ENCODE measurements at regions of chr17 and their contacts with region 1.

Region 1: DNA sequence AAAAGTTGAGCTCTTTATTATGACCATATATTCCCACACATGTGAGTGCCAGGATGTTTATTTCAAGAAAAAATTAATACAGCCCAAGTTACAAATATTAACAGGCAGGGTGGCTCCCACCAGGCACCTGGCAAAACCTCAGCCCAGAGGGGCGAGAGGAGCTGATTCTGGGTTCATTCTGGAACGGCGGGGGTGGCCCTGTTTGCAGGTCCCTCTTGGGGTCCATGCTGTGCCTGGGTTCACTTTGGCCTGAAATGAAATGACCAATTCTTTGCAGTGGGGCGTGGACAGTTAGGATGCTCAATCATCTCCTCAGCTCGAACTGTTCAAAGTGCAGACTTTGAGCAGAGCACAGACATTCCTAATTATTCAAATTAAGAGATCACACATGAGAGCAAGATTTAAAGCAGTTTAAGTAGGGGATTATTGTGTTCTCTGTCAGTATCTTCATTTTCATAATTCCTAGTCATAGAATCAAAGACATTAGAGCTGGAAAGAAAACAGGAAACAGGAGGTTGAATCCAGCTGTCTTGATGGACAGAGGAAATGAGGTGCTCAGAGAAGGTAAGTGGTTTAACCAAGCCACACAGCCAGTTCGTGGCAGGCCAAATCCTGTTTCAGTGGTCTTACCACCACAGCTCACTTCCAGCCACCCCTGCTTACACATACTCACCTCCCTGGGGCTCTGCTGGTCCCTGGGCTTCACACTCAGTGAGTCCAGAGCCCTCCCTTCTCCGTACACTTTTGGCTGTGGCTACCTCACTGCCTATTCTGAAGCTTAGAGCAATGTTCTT is 363.9 kb upstream of the TNRC6C start:
- DNase-seq: no peak
- H3K4me3 ChIP-seq: no peak overlapping the region
- H3K27ac ChIP-seq: no peak overlapping the region
- H3K4me1 ChIP-seq: no peaks in the 10 kb centered on the region
- H3K27me3 ChIP-seq: no peaks in the 10 kb centered on the region
- CTCF ChIP-seq: no peak

Region 2: GRCh38 chr17:77690271-77691161 is 95.9 kb after region 1 on chr17:
- CTCF ChIA-PET with region 1: no interaction called
- dilution Hi-C with region 1: loop called (anchors 5 kb)
- in situ Hi-C with region 1: no loop called
- intact Hi-C with region 1: no loop called
- DNase-seq: no peak
- H3K4me3 ChIP-seq: no peak overlapping the region
- H3K27ac ChIP-seq: no peak overlapping the region
- H3K4me1 ChIP-seq: peaks cover 7% of the 10 kb centered on the region
- H3K27me3 ChIP-seq: peaks cover 16% of the 10 kb centered on the region
- CTCF ChIP-seq: no peak

Region 3: DNA sequence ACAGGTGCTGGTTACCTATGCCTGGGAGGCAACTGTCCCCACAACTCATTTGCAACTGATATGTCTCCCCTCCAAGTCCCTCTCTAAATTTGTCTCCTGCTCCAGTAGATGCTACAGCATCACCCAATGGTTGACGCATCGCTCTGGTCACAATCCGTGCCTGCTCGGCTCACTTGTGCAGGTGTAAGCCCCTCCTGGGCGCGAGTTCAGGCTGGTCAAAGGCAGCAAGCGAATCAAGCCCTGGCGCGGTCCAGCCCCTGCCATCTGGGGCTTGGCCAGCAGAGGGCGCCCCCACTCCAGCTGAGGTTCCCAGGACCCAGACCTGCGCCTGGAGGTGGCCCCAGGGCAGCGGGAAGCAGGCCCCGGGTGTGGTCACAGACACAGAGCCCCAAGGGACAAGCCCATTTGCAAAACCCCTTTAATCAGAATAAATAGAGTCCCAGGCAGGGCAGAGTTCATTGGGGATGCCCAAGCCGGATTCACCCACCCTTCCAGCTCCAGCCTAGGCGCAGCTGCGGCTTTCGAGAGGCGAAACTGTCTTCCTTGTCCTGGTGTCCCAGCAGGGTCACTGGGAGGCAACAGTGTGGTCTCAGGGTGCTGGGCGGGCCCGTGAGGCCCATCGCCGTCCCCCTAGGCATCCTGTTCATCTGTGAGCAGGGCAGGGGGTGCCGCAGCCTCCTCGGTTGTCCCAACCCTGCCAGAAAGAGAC is 518.1 kb after region 1 on chr17:
- CTCF ChIA-PET with region 1: no interaction called
- dilution Hi-C with region 1: no loop called
- in situ Hi-C with region 1: no loop called
- intact Hi-C with region 1: no loop called
- DNase-seq: peak; percentile 38
- H3K4me3 ChIP-seq: no peak overlapping the region
- H3K27ac ChIP-seq: no peak overlapping the region
- H3K4me1 ChIP-seq: no peaks in the 10 kb centered on the region
- H3K27me3 ChIP-seq: no peaks in the 10 kb centered on the region
- CTCF ChIP-seq: peak; percentile 91 to 99

Measured in mammary epithelial cell (primary cell).